Calu3 (cell line): ENCODE measurements at regions of chr7 and their contacts with region 1.

Region 1: GRCh38 chr7:77954773-77955555 is 156.4 kb downstream of the PHTF2 start:
- DNase-seq: no peak
- H3K4me3 Mint-ChIP-seq: no peak overlapping the region
- H3K27ac Mint-ChIP-seq: no peak overlapping the region
- H3K4me1 Mint-ChIP-seq: no peaks in the 10 kb centered on the region
- H3K27me3 Mint-ChIP-seq: no peaks in the 10 kb centered on the region
- CTCF ChIP-seq: no peak

Region 2: GRCh38 chr7:79692015-79692414 is 1737.1 kb after region 1 on chr7:
- CTCF ChIA-PET with region 1: interaction called, 12 read pairs
- intact Hi-C with region 1: no loop called
- DNase-seq: no peak
- H3K4me3 Mint-ChIP-seq: no peak overlapping the region
- H3K27ac Mint-ChIP-seq: no peak overlapping the region
- H3K4me1 Mint-ChIP-seq: no peaks in the 10 kb centered on the region
- H3K27me3 Mint-ChIP-seq: no peaks in the 10 kb centered on the region
- CTCF ChIP-seq: no peak